PC-3 (cell line): ENCODE measurements at regions of chr5 and their contacts with region 1.

Region 1: DNA sequence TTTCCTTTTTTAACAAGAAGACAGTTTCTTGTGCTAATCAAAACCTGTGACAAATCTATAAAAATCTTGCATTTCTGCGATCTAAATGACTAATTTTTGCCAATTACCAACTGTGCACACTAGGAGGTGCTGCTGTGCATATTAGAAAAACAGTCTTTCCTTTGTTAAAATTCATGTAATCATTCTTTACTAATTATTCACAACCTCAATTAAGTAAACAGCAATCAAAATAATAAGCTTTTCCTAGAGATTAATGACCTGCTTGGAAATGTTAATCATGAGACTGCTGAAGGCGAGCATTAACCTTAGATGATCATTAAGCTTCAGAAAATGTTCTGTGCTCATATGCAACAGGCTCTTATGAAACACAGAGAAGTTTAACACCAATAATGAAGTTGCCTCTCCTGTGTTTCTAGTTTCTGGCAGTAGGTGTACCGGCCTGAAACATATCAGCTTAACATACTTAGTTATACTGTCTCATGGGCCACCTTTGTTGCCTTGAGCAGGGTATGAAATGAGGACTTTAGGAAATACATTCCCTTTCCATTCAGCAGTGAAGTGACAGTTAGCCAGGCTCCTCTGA is 17.7 kb downstream of the RFESD start:
- DNase-seq: peak; percentile 63
- ATAC-seq: peak; percentile 49
- H3K4me3 ChIP-seq: no peak overlapping the region
- H3K27ac ChIP-seq: no peak overlapping the region
- H3K4me1 ChIP-seq: no peaks in the 10 kb centered on the region; the same call in 1 of the 2 replicates
- H3K27me3 ChIP-seq: no peaks in the 10 kb centered on the region
- CTCF ChIP-seq: peak; percentile 93

Region 2: DNA sequence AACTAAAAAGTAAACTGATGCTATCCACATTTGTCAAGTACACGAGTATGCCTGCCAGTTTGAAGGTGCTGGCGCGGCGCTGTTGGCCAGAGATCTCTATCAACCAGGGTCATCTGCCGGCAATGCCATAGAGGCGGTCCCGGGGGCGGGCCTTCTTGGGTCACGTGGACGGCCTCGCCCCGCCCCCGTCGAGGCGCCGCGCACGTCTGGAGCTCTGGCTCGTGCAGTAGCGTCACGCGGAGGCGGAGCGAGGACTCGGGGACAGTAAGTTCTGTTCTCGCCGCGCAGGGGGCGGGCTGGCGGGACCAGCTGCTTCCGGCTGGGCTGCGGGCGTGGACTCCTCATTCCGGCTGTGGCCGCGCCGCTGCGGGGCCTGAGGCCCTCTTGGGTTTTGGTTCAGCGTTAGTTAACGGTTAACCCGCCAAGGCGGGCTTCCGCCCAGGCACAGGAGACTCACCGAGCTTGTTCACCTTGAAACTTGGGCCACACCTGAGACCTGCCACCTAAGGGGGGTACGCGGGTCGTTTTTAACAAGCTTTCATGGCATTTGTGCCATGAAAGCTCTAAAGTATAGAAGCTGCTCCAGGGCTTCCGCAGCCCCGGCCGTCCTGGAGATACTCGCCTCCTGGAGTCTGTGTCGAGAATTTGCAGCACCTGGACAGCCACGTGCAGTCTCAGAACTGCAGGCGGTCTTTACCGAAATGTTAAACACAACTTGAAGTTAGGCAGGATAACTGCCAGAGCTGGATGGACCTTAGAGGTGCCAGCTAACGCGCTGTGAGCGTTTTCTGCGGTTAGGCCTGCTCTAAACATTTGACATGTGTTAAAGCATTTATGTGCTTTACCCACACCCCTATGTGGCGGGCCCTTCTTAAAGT is 17.5 kb before region 1 on chr5 and contains the start of gene RFESD:
- CTCF ChIA-PET with region 1: no interaction called
- POLR2A ChIA-PET with region 1: interaction called, 8 read pairs
- intact Hi-C with region 1: loop called (anchors 2 kb)
- DNase-seq: peak; percentile 98
- ATAC-seq: peak; percentile 95
- H3K4me3 ChIP-seq: peak within 1 kb of the TSS; percentile 74
- H3K27ac ChIP-seq: peak within 1 kb of the TSS; percentile 64
- H3K4me1 ChIP-seq: peaks cover 12% of the 10 kb centered on the region
- H3K27me3 ChIP-seq: no peaks in the 10 kb centered on the region
- CTCF ChIP-seq: peak; percentile 22; the same call in 1 of the 2 replicates
- total RNA-seq, gene RFESD: 0.36 and 2.4 TPM in 2 replicates

Region 3: GRCh38 chr5:95712347-95712958 is 48.2 kb after region 1 on chr5:
- CTCF ChIA-PET with region 1: no interaction called
- POLR2A ChIA-PET with region 1: no interaction called
- intact Hi-C with region 1: loop called (anchors 1 kb)
- DNase-seq: peak; percentile 94
- ATAC-seq: peak; percentile 97
- H3K4me3 ChIP-seq: no peak overlapping the region
- H3K27ac ChIP-seq: peak overlapping the region; percentile 45
- H3K4me1 ChIP-seq: peaks cover 24% of the 10 kb centered on the region
- H3K27me3 ChIP-seq: no peaks in the 10 kb centered on the region
- CTCF ChIP-seq: no peak

Region 4: GRCh38 chr5:95773335-95774059 is 109.2 kb after region 1 on chr5:
- CTCF ChIA-PET with region 1: no interaction called
- POLR2A ChIA-PET with region 1: no interaction called
- intact Hi-C with region 1: loop called (anchors 2 kb)
- DNase-seq: peak; percentile 68
- ATAC-seq: no peak
- H3K4me3 ChIP-seq: no peak overlapping the region
- H3K27ac ChIP-seq: no peak overlapping the region
- H3K4me1 ChIP-seq: peaks cover 11% of the 10 kb centered on the region
- H3K27me3 ChIP-seq: no peaks in the 10 kb centered on the region
- CTCF ChIP-seq: no peak